Cardiac septum (tissue), 1 donor: ENCODE measurements at regions of chr13 and their contacts with region 1.

Region 1: GRCh38 chr13:113220877-113221276 is 11.5 kb downstream of the CUL4A start:
- DNase-seq: no peak

Region 2: GRCh38 chr13:112942689-112943308 is 278.1 kb before region 1 on chr13:
- intact Hi-C with region 1: loop called (anchors 10 kb)
- DNase-seq: peak; percentile 97

Region 3: DNA sequence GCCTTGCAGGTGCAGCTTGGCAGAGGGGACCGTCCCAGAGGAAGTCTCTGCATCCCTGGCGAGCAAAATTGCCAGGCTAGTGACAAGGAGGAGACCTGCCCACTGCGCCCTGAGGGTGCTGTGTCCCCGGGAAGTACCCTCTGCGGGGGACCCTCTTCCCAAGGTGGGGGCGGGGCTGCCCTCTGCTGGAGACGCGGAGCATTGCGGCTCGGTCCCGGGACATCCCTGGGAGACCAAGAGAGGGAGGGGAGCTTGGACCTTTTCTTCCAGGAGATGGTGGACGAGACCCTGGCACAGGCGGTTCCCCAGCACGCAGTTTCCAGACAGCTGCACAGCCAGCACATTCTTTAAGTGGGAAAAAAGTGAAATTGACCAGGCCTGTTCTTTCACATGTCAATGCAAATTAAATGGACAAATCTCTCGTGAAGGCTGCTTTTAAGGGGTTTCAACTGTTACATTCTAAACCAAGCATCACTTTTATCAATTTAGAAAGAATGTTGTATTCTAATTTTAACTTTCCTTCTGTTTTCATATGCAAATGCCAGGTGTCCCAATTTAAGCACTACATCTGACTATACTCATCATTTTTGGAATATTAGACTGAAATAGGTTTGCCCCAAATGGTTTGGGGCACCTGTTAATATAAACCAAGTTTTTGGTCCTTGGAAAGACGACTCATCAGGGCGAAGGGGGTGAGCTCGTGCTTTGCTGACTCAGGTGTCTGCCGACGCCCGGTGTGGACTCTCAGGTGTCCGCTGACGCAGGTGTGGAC is 191.2 kb before region 1 on chr13:
- intact Hi-C with region 1: loop called (anchors 2 kb)
- DNase-seq: no peak